ENCODE measurements at regions of chr20 and their contacts with region 1.

Region 1: DNA sequence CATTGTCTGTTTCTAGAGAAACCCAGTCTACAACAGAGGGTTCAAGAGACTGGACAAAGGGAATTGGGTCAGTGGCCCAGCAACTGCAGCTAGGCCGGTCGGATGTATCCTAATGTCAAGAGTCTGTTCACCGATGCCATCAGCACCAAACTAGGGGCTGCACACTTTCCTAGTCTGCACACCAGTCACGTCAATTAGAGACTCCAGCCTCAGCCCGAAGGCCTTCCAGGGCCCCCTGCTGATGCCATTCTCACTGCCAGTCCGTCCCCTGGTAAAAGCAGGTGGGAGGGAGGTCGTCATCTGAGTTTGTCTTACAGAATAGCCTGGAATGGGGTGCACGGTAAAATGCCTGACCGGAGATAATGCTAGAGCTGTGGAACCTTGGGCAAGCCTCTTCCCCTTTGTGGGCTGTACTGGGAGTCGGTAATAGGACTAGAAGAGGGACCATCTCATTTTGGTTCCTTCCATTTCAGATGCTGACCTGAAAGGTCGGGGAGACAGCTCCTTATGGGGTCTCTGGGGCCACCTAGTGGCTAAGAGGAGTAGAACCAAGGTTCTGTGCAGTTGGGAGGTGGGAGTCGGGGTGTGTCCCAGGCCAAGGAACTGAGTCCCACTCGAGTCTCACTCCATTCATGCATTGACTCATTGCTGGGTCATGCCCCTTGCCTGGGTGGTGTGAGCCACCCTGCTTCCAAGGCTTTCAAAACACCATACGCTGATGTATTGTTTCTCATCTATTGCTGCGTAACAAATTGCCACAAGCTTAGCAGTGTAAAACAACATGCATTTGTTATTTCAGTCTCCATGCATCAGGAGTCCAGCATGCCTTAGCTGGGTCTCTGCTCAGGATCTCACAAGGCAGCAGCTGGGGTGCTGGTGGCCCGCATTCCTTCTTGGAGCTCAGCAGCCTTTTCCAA is 5.1 kb downstream of the SOX12 start:
- DNase-seq: peak; percentile 76
- ATAC-seq: peak; percentile 56
- H3K4me3 Mint-ChIP-seq: no peak overlapping the region
- H3K27ac Mint-ChIP-seq: no peak overlapping the region
- H3K4me1 Mint-ChIP-seq: peaks cover 17% of the 10 kb centered on the region
- H3K27me3 Mint-ChIP-seq: no peaks in the 10 kb centered on the region
- CTCF ChIP-seq: peak; percentile 90

Region 2: GRCh38 chr20:208942-209566 is 121.4 kb before region 1 on chr20:
- CTCF ChIA-PET with region 1: interaction called, 12 read pairs
- POLR2A ChIA-PET with region 1: no interaction called
- intact Hi-C with region 1: loop called (anchors 5 kb)
- DNase-seq: peak; percentile 28
- ATAC-seq: peak; percentile 89
- H3K4me3 Mint-ChIP-seq: no peak overlapping the region
- H3K27ac Mint-ChIP-seq: no peak overlapping the region
- H3K4me1 Mint-ChIP-seq: no peaks in the 10 kb centered on the region
- H3K27me3 Mint-ChIP-seq: no peaks in the 10 kb centered on the region
- CTCF ChIP-seq: peak; percentile 70

Region 3: GRCh38 chr20:227439-228105 is 102.9 kb before region 1 on chr20:
- CTCF ChIA-PET with region 1: interaction called, 12 read pairs
- POLR2A ChIA-PET with region 1: interaction called, 3 read pairs
- intact Hi-C with region 1: no loop called
- DNase-seq: no peak
- ATAC-seq: peak; percentile 60
- H3K4me3 Mint-ChIP-seq: no peak overlapping the region
- H3K27ac Mint-ChIP-seq: peak overlapping the region; percentile 30
- H3K4me1 Mint-ChIP-seq: peaks cover 18% of the 10 kb centered on the region
- H3K27me3 Mint-ChIP-seq: peaks cover 2% of the 10 kb centered on the region
- CTCF ChIP-seq: no peak

Region 4: DNA sequence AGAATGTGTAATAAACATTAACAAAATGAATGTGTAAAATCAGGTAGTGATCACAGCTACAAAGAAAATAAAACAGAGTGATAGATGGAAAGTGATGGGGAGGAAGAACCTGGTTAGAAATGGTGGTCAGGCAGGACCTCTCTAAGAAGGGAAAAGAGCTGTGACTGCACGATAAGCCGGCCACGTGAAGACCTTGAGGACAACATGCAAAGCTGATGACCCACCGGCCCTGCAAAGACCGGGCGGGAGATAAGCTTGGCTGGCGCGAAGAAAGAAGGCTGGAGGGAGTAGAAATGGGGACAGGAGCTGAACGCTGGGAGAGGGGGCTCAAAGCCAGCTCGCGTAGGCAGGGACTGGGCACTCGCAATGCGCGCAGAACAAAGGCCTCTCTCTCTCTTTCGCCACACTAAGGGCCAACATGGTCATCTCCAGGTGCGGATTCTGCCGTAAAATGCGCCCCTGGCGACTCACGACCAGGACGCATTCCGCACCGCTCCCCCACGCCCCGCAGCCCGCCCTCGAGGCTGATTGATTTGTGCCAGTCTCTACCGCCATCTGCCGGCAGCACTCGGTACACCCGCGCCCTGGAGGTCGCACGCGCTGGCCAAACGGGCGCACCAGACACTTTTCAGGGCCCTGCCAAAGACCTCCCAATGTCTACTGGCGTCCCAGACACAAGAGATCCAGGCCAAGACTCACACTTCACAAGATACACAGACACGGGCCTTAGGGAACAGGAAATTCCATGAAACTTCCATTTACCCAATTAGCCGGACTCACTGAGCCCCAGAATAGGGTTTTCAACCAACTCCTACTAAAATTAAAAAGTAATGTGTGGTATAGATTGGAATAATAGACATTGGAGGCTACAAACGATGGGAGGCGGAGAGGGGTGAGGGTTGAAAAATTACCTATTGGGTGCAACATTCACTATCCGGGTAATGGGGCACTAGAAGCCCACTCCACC is 63.6 kb before region 1 on chr20:
- CTCF ChIA-PET with region 1: interaction called, 45 read pairs
- POLR2A ChIA-PET with region 1: no interaction called
- intact Hi-C with region 1: no loop called
- DNase-seq: peak; percentile 96
- ATAC-seq: peak; percentile 99
- H3K4me3 Mint-ChIP-seq: peak overlapping the region; percentile 71
- H3K27ac Mint-ChIP-seq: peak overlapping the region; percentile 30
- H3K4me1 Mint-ChIP-seq: peaks cover 10% of the 10 kb centered on the region
- H3K27me3 Mint-ChIP-seq: peaks cover 4% of the 10 kb centered on the region
- CTCF ChIP-seq: peak; percentile 95

Region 5: DNA sequence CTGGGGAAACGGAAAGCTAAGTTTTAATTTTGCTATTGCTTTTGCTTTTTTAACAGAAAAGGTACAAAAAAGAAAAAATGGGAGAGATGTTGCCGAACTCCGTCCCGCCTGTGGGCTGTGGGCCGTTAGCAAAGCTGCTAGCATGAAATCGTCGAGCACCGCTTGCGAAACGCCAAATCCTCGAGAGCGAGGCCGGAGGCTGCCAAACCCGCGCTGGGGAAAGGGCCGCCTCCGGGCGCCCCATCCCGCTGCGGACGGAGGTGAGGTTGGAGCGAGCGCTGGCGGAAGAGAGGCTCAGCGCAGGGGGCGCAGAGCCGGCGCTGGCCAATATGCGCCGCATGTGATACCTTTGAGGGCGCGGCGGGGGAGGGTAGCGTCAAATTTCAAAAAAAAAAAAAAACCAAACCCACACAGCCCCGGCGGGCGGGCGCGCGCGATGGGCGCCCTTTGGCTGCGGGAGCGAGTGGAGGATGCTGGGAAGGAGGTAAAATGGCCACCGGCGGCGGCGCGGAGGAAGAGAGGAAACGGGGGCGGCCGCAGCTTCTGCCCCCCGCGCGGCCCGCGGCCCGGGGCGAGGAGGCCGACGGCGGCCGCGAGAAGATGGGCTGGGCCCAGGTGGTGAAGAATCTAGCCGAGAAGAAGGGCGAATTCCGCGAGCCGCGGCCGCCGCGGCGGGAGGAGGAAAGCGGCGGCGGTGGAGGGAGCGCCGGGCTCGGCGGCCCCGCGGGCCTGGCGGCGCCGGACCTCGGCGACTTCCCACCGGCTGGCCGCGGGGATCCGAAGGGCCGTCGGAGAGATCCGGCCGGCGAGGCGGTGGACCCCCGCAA is 33.2 kb before region 1 on chr20 and contains the start of gene ZCCHC3:
- CTCF ChIA-PET with region 1: interaction called, 19 read pairs
- POLR2A ChIA-PET with region 1: interaction called, 94 read pairs
- intact Hi-C with region 1: loop called (anchors 5 kb)
- DNase-seq: peak; percentile 90
- ATAC-seq: peak; percentile 86
- H3K4me3 Mint-ChIP-seq: peak within 1 kb of the TSS; percentile 99
- H3K27ac Mint-ChIP-seq: peak within 1 kb of the TSS; percentile 98
- H3K4me1 Mint-ChIP-seq: peaks cover 41% of the 10 kb centered on the region
- H3K27me3 Mint-ChIP-seq: no peaks in the 10 kb centered on the region
- CTCF ChIP-seq: no peak
- total RNA-seq, gene ZCCHC3: 17.8 to 18.0 TPM

Region 6: GRCh38 chr20:347640-348484 is 17.4 kb after region 1 on chr20:
- CTCF ChIA-PET with region 1: interaction called, 24 read pairs
- POLR2A ChIA-PET with region 1: interaction called, 3 read pairs
- intact Hi-C with region 1: no loop called
- DNase-seq: peak; percentile 76
- ATAC-seq: peak; percentile 82
- H3K4me3 Mint-ChIP-seq: peak overlapping the region; percentile 79
- H3K27ac Mint-ChIP-seq: peak overlapping the region; percentile 47
- H3K4me1 Mint-ChIP-seq: peaks cover 12% of the 10 kb centered on the region
- H3K27me3 Mint-ChIP-seq: no peaks in the 10 kb centered on the region
- CTCF ChIP-seq: no peak

Region 7: DNA sequence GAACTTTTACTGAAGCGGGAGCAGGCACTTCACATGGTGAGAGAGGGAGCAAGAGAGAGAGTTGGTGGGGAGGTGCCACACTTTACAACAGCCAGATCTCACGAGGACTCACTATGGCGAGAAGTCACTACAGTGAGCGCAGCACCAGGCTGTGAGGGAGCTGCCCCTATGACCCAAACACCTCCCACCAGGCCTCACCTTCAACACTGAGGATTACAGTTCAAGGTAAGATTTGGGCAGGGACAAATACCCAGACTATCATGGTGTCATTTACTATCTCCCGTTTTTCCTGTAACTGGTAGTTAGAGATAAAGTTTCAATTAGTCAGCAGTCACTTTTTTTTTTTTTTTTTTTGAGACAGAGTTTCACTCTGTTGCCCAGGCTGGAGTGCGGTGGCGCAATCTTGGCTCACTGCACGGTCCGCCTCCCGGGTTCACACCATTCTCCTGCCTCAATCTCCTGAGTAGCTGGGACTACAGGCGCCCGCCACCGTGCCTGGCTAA is 85.4 kb after region 1 on chr20:
- CTCF ChIA-PET with region 1: no interaction called
- POLR2A ChIA-PET with region 1: no interaction called
- intact Hi-C with region 1: no loop called
- DNase-seq: no peak
- ATAC-seq: no peak
- H3K4me3 Mint-ChIP-seq: no peak overlapping the region
- H3K27ac Mint-ChIP-seq: peak overlapping the region; percentile 62
- H3K4me1 Mint-ChIP-seq: peaks cover 41% of the 10 kb centered on the region
- H3K27me3 Mint-ChIP-seq: no peaks in the 10 kb centered on the region
- CTCF ChIP-seq: no peak

Region 8: DNA sequence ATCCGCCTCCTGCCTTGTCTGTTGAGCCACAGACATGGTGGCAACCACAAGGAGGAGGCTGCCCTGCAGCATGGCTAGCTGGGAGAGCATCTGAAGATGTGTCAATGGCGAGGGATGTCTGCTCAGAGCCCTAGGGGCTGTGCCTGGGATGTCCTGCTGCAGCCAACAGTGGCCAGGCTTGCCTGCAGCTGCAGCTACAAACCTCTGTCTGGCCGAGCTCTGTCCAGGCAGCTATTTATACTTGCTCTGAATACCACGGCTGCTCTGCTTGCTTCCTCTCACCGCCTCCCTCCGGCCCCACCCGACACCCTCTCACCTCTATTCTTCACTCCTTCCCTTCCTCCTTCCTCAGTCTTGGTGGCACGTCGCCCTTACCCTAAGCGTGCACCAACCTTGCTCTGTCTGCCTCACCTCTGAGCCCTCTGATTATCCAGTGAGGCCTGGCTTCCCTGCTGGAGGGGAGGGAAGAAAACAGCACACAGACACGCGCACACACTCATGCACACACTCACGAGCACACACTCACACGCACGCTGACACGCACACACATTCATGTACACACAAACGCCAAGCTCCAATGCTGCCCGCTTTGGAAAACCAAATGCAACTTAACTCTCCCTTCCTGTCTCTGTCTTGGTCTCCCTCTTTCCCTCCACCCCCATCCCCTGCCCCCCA is 585.8 kb after region 1 on chr20 and contains the start of gene ANGPT4:
- CTCF ChIA-PET with region 1: no interaction called
- POLR2A ChIA-PET with region 1: no interaction called
- intact Hi-C with region 1: no loop called
- DNase-seq: no peak
- ATAC-seq: no peak
- H3K4me3 Mint-ChIP-seq: no peak within 1 kb of the TSS
- H3K27ac Mint-ChIP-seq: no peak within 1 kb of the TSS
- H3K4me1 Mint-ChIP-seq: no peaks in the 10 kb centered on the region
- H3K27me3 Mint-ChIP-seq: peaks cover 2% of the 10 kb centered on the region
- CTCF ChIP-seq: no peak
- total RNA-seq, gene ANGPT4: not detected

Measured in activated CD8-positive, alpha-beta T cell treated with anti-CD3 and anti-CD28 coated beads for 36 hours (primary cell).